BJ (cell line): ENCODE measurements at regions of chr11 and their contacts with region 1.

Region 1: DNA sequence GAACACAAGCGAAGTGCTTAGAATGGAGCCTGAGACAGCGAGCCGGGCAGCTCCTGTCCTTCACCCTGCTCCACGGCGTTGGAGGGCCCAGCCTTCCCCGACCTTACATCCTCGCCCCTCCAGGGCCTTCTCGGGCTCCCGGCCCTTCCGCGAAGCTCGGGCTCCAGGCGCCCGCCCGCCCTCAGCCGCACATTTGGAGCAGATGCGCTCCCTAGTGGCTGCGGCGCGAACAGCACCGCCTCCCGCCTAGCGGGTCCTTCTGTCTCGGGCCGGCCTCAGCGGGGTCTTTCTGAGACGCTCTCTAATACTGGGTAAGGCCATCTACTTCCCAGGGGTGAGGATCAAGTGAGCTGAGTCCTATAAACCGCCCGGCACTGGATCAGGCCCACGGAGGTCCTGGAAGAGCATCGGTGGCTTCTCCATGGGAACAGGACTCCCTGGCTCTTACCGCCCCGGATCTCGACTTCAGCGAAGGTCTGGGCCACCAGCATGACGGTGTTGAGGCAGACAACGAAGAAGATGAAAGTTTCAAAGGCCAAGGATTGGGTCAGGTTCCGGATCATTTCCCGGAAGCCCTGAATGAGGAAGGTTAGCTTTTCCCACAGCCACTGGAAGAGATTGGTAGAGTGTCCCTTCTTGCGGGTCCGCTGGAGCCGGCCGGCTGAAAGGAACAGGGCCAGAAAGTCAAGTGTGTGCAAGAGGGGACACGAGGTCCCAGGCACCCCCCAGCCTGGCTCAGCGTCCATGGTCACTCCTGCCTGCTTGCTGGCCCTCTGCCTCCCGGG is 3.7 kb downstream of the CATSPER1 start:
- DNase-seq: no peak
- H3K4me3 ChIP-seq: no peak overlapping the region
- H3K27me3 ChIP-seq: no peaks in the 10 kb centered on the region
- CTCF ChIP-seq: peak; percentile 98

Region 2: DNA sequence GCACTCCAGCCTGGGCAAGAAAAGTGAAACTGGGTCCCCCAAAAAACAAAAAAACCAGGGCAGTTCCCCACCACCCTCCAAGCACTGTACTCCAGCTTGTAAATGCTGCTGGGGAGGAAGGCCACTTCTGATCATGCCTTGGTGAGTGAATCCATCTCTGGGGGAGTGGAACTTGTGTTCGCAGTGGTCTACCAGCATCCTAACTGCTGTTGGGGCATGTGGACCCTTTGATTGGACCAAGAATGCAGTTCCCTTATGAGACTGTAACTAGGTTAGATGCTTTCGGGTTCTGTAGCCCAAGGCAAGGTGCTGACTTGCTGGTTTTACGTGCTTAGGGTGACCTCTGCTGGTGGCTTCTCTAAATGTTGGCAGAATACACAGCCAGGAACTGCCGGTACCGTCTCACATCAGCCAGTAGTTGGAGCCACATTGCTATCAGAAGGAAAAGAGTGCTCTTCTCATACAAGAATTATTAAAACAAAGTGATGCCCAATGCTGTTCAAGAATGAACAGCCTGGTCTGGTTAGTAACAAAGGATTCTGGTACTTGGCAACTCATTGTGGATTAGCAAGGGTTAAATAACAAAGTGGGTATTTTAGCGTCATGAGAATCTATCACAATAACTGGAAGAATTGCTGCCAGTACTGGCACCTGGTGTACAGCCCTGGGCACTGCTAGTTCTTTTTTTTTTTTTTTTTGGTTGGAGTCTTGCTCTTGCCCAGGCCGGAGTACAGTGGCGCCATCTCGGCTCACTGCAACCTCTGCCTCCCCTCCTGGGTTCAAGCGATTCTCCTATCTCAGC is 33.6 kb before region 1 on chr11:
- CTCF ChIA-PET with region 1: interaction called, 26 read pairs
- POLR2A ChIA-PET with region 1: no interaction called
- DNase-seq: peak; percentile 70
- H3K4me3 ChIP-seq: no peak overlapping the region
- H3K27me3 ChIP-seq: no peaks in the 10 kb centered on the region
- CTCF ChIP-seq: peak; percentile 93

Region 3: DNA sequence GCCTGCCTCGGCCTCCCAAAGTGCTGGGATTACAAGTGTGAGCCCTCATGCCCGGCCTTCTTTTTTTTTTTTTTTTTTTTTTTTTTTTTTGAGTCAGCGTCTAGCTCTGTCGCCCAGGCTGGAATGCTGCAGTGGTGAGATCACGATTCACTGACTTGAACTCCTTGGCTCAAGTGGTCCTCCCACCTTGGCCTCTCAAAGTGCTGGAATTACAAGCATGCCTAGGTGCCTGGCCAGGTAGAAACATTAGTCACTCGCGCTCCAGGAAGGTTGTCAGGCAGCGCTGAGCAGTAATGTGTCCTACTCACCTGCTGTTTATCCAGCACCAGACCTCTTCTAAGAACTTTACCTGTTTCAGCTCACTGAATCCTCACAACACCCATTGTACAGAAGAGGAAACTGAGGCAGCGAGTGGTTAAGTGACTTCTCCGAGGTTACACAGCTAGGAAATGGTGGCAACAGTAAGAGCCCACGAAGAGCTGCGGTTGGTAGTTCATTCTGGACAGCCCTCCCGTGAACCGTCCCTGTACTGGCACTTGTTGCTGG is 11.3 kb before region 1 on chr11:
- CTCF ChIA-PET with region 1: interaction called, 48 read pairs
- POLR2A ChIA-PET with region 1: interaction called, 18 read pairs
- DNase-seq: no peak
- H3K4me3 ChIP-seq: no peak overlapping the region
- H3K27me3 ChIP-seq: no peaks in the 10 kb centered on the region
- CTCF ChIP-seq: no peak

Region 4: DNA sequence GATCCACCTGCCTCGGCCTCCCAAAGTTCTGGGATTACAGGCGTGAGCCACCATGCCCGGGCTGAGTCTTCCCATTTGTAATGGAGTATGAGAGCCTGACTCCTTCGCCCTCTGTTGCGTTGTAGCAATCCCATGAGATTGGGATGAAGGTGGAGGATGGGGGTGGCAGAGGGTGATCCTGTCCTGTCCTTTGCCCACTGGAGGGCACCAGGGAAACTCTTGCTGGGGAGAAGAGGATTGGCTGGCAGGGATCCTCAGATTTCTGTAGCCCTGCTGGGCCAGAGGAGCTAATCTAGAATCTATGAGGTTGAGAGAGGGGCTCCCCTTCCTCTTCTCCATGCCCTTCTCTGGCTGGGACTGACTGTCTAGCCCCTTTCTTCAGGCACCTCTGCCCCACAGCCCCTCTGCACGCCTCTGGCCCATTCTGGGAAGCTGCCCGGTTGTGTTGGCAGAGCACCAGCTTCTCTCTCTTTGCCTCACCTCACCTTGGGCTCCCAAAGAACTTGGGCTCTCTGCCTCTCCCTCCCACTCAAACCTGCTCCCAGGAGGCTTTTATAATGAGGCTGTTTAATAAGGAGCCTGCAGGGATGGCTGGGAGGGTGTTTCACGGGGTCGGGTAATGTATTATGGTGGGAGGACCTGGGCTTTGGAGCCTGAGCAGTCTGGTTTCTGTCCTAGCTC is 13.2 kb after region 1 on chr11:
- CTCF ChIA-PET with region 1: interaction called, 31 read pairs
- POLR2A ChIA-PET with region 1: no interaction called
- DNase-seq: no peak
- H3K4me3 ChIP-seq: no peak overlapping the region
- H3K27me3 ChIP-seq: peaks cover 2% of the 10 kb centered on the region
- CTCF ChIP-seq: no peak

Region 5: GRCh38 chr11:66045177-66045639 is 22.6 kb after region 1 on chr11:
- CTCF ChIA-PET with region 1: interaction called, 40 read pairs
- POLR2A ChIA-PET with region 1: no interaction called
- DNase-seq: no peak
- H3K4me3 ChIP-seq: no peak overlapping the region
- H3K27me3 ChIP-seq: no peaks in the 10 kb centered on the region; the same call in 1 of the 2 replicates
- CTCF ChIP-seq: peak; percentile 97

Region 6: DNA sequence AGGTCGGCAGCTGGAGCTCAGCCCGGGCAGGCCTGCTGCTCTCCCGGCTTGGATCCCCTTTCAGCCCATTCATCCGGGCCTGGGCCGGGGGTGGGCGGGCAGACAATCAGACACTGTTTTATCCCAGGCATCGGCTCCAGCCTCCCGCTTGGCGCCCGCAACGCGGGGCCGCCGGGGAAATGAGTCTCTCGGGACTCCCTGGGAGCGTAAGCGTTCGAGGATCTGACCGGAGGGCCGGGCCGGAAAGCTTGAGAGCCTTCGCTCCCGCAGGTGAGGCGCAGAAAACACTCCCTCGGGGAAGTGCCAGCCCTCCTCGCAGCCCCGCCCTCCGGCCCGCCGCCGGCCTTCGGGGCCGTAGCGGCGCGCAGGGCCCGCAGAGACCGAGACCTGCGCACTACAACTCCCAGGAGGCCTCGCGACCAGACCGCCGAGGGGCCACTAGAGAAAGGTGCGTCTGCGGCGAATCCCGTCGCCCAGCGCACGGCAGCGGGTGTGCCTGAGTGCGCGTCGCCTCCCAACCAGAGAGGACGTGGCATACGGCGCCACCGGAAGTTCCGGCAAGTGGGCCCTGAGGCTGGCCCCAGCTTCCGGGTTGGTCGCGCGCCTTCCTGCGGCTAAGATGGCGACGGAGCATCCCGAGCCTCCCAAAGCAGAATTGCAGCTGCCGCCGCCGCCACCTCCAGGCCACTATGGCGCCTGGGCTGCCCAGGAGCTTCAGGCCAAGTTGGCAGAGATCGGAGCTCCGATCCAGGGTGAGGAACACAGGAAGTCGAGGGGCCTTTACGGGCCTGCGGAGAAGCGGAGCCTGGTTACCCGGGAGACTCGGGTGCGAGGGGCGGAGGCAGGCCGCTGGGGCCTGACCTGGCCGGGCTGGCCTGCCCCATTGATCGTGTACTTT is 29.4 kb after region 1 on chr11 and contains the start of gene SF3B2:
- CTCF ChIA-PET with region 1: interaction called, 10 read pairs
- POLR2A ChIA-PET with region 1: no interaction called
- DNase-seq: peak; percentile 92
- H3K4me3 ChIP-seq: peak within 1 kb of the TSS; percentile 88
- H3K27me3 ChIP-seq: no peaks in the 10 kb centered on the region
- CTCF ChIP-seq: no peak
- polyA plus RNA-seq, gene SF3B2: 70.3 and 82.7 TPM in 2 replicates